OCI-LY7 (cell line): ENCODE measurements at regions of chr11 and their contacts with region 1.

Region 1: DNA sequence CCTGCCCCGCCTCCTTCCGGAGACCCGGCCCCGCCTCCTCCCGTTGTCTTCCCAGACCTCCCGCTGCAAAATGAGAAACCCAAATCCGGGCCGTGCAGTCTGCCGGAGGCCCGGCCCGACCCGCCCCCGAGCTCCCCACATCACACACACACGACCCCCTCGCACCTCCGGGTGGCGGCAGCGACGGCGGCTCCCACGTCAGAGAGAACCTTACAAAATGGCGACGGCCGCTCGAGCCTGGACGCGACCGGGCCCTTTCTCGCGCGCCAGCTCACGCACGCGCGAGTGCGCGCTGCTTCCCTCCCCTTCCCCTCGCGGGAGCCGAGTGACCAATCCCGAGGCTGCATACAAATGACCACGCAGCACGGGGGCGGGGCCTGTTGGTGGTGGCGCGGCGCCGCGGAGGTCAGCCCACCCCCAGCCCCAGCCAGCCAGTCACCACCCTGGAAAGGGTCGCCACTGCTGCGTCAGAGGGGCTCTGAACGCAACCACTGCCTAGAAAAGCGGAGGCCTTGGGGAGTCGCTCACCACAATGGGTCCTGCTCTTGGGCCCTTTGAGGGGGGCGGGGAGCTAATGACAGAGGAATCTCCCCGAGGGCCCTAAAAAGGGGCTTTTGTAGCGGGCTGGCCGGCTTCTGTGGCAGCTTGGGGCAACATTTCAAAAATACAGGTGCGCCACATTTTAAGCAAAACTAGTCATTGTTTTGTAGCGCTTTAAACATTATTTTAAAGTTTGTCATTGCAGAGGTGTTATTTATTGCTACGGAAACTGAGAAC is at the start of gene RBM4B:
- DNase-seq: peak; percentile 97
- H3K4me3 ChIP-seq: peak within 1 kb of the TSS; percentile 77
- H3K27ac ChIP-seq: peak within 1 kb of the TSS; percentile 87
- H3K4me1 ChIP-seq: peaks cover 44% of the 10 kb centered on the region
- CTCF ChIP-seq: no peak
- total RNA-seq, gene RBM4B: 29.1 and 40.0 TPM in 2 replicates

Region 2: DNA sequence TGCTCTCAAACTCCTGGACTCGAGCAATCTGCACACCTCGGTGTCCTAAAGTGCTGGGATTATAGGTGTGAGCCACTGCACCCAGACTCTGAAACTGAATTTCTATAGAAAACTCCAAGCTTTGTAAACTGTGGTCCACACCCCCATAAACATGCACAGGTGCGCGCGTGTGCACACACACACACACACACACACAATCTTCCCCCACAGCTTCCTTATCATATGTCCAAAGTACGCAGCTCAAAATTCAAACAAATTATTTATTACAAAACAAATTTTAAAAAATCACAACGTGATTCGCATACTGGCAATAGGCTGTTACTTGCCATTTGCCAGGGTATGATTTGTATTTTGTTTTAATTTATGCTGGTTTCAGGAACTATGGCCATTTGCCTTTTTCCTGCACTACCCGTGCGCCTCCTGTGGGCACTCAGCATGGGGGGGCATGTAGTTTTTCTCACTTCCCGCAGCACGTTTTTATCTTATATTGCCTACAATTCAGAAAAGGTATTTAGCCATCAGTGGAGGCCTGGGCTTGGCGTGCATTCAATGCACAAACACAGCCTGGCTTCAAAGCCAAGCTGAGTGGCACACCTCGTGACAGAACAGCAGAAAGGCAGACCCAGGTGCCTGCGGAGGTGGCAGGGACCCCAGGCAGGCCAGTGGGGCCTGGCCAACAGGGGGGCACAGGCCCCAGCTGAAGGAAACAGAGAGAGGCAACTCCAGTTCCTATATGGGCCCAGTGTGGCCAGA is 854.8 kb before region 1 on chr11:
- CTCF ChIA-PET with region 1: no interaction called
- POLR2A ChIA-PET with region 1: no interaction called
- intact Hi-C with region 1: no loop called
- DNase-seq: no peak
- H3K4me3 ChIP-seq: no peak overlapping the region
- H3K27ac ChIP-seq: no peak overlapping the region
- H3K4me1 ChIP-seq: peaks cover 5% of the 10 kb centered on the region
- CTCF ChIP-seq: no peak

Region 3: GRCh38 chr11:66480117-66480938 is 197.5 kb before region 1 on chr11 and contains the start of gene DPP3:
- CTCF ChIA-PET with region 1: no interaction called
- POLR2A ChIA-PET with region 1: interaction called, 3 read pairs
- intact Hi-C with region 1: loop called (anchors 1 kb)
- DNase-seq: peak; percentile 98
- H3K4me3 ChIP-seq: peak within 1 kb of the TSS; percentile 89
- H3K27ac ChIP-seq: peak within 1 kb of the TSS; percentile 47
- H3K4me1 ChIP-seq: peaks cover 11% of the 10 kb centered on the region
- CTCF ChIP-seq: peak; percentile 30; the same call in 1 of the 2 replicates
- total RNA-seq, gene DPP3: 40.0 and 47.2 TPM in 2 replicates

Region 4: DNA sequence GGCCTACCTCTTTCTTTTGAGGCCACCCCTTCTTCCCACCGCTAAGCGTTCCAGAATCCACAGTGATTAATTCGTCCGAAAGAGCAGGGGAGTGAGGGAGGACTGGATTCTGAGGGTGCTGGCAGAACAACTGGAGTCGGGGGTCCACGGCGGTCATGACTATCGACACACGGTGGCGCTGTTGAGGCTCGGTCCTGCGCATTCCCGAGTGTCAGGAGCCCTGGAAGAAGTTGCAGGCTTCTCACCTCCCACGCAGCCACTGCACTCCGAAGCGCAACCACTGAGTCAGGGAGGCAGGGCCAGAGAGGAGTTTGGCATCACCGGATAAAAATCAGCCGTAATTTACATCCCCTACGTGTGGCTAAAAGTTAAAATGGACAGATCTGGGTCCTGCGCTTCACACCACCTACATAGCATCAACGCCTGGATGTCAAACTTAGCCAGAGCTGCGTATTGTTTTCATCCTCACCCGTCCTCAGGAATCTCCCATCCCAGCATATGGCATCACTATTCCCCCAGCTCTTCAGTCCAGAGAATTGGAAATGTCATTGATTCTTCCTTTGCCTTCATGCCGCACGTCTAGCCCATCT is 98.7 kb before region 1 on chr11:
- CTCF ChIA-PET with region 1: interaction called, 5 read pairs
- POLR2A ChIA-PET with region 1: interaction called, 6 read pairs
- intact Hi-C with region 1: loop called (anchors 1 kb)
- DNase-seq: peak; percentile 73
- H3K4me3 ChIP-seq: no peak overlapping the region
- H3K27ac ChIP-seq: no peak overlapping the region
- H3K4me1 ChIP-seq: no peaks in the 10 kb centered on the region
- CTCF ChIP-seq: peak; percentile 91

Region 5: GRCh38 chr11:66616379-66617154 is 61.2 kb before region 1 on chr11 and contains the start of gene RBM14:
- CTCF ChIA-PET with region 1: interaction called, 5 read pairs
- POLR2A ChIA-PET with region 1: interaction called, 4 read pairs
- intact Hi-C with region 1: loop called (anchors 1 kb)
- DNase-seq: peak; percentile 100
- H3K4me3 ChIP-seq: peak within 1 kb of the TSS; percentile 94
- H3K27ac ChIP-seq: peak within 1 kb of the TSS; percentile 81
- H3K4me1 ChIP-seq: peaks cover 62% of the 10 kb centered on the region
- CTCF ChIP-seq: no peak
- total RNA-seq, gene RBM14: 65.8 and 94.6 TPM in 2 replicates

Region 6: DNA sequence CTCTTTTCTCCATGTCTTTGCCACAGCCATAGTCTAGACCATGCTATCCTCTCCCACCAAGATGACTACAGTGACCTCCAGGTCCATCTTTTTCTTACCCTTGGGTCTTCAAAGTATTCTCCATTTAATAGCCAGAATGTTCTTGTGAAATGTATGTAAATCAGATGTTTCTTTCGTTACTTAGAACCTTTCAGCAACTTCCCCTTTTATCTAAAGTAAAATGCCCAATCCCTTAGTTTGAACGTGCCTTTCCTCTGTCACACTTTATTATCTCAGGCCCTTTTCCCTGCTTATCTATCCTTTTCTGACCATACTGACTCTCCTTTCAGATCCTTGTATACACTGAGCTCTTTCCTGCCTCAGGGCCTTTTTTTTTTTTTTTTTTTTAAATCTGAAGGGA is 18.0 kb before region 1 on chr11:
- CTCF ChIA-PET with region 1: interaction called, 3 read pairs
- POLR2A ChIA-PET with region 1: interaction called, 17 read pairs
- intact Hi-C with region 1: no loop called
- DNase-seq: peak; percentile 47
- H3K4me3 ChIP-seq: peak overlapping the region; percentile 33
- H3K27ac ChIP-seq: peak overlapping the region; percentile 65
- H3K4me1 ChIP-seq: peaks cover 24% of the 10 kb centered on the region
- CTCF ChIP-seq: no peak